Caco-2 (cell line): ENCODE measurements at regions of chr12 and their contacts with region 1.

Region 1: DNA sequence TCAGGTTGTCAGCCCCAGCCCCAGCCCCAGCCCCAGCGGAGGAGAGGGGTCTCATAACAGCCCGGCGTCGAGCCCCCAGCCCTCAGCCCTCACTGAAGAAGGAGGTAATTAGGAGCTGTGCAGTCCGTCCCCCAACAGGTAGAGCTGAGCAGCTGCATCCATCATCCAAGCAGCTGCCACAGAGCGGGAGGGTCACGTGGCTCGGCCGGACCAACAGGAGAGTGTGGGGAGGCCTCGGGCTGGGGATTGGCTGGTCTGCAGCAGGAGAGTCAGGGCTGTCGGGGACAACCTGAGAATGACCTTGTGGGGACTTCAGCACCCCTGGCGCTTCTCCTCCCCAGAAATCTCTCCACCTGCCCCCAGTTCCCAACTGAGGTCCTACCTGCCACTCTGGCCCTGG is 29.6 kb downstream of the SMUG1 start:
- DNase-seq: peak; percentile 81 to 86
- H3K4me3 ChIP-seq: no peak overlapping the region
- H3K4me3 Mint-ChIP-seq: peak overlapping the region; percentile 44
- H3K27ac Mint-ChIP-seq: peak overlapping the region; percentile 37
- H3K4me1 ChIP-seq: peaks cover 18% of the 10 kb centered on the region
- H3K4me1 Mint-ChIP-seq: peaks cover 11% of the 10 kb centered on the region
- H3K27me3 ChIP-seq: no peaks in the 10 kb centered on the region
- H3K27me3 Mint-ChIP-seq: no peaks in the 10 kb centered on the region
- CTCF ChIP-seq: peak in 1 of 2 experiments; percentile 39

Region 2: GRCh38 chr12:54191550-54192022 is 32.4 kb after region 1 on chr12:
- CTCF ChIA-PET with region 1: interaction called, 12 read pairs
- POLR2A ChIA-PET with region 1: no interaction called
- intact Hi-C with region 1: no loop called
- DNase-seq: peak; percentile 86 to 87
- H3K4me3 ChIP-seq: no peak overlapping the region
- H3K4me3 Mint-ChIP-seq: no peak overlapping the region
- H3K27ac Mint-ChIP-seq: no peak overlapping the region
- H3K4me1 ChIP-seq: peaks cover 37% of the 10 kb centered on the region
- H3K4me1 Mint-ChIP-seq: peaks cover 16% of the 10 kb centered on the region
- H3K27me3 ChIP-seq: no peaks in the 10 kb centered on the region
- H3K27me3 Mint-ChIP-seq: no peaks in the 10 kb centered on the region
- CTCF ChIP-seq: peak; percentile 74 to 80